MCF 10A (cell line): ENCODE measurements at regions of chr22 and their contacts with region 1.

Region 1: GRCh38 chr22:27885977-27886842 is 32.8 kb downstream of the PITPNB start:
- DNase-seq: peak; percentile 46
- H3K4me3 Mint-ChIP-seq: no peak overlapping the region
- H3K27ac Mint-ChIP-seq: peak overlapping the region; percentile 39
- H3K4me1 Mint-ChIP-seq: peaks cover 31% of the 10 kb centered on the region
- H3K27me3 Mint-ChIP-seq: no peaks in the 10 kb centered on the region
- CTCF ChIP-seq: peak; percentile 86

Region 2: GRCh38 chr22:26756675-26757293 is 1129.4 kb before region 1 on chr22:
- CTCF ChIA-PET with region 1: interaction called, 4 read pairs
- POLR2A ChIA-PET with region 1: no interaction called
- intact Hi-C with region 1: loop called (anchors 2 kb)
- DNase-seq: peak; percentile 11
- H3K4me3 Mint-ChIP-seq: no peak overlapping the region
- H3K27ac Mint-ChIP-seq: no peak overlapping the region
- H3K4me1 Mint-ChIP-seq: no peaks in the 10 kb centered on the region
- H3K27me3 Mint-ChIP-seq: no peaks in the 10 kb centered on the region
- CTCF ChIP-seq: peak; percentile 93

Region 3: DNA sequence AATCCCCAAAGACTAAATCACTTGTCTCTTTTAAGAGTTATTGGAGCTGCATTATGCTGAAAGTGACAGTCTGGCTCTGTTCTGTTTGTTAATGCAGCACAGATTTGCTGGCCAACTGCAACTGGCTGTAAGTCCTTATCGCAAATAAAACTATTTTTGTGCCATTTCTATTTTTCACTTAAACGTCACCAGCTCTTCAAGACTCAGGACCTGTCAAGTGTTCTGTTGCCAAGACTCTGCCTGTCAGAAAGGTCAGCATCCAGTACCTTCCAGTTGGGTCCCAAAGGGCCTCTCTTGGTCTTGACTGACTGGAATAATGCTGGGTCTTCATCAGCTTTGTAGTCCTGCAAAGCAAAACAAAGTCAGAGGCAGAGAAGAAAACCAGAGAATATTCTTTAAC is 12.7 kb before region 1 on chr22:
- CTCF ChIA-PET with region 1: interaction called, 23 read pairs
- POLR2A ChIA-PET with region 1: no interaction called
- intact Hi-C with region 1: no loop called
- DNase-seq: no peak
- H3K4me3 Mint-ChIP-seq: no peak overlapping the region
- H3K27ac Mint-ChIP-seq: no peak overlapping the region
- H3K4me1 Mint-ChIP-seq: peaks cover 6% of the 10 kb centered on the region
- H3K27me3 Mint-ChIP-seq: no peaks in the 10 kb centered on the region
- CTCF ChIP-seq: no peak

Region 4: DNA sequence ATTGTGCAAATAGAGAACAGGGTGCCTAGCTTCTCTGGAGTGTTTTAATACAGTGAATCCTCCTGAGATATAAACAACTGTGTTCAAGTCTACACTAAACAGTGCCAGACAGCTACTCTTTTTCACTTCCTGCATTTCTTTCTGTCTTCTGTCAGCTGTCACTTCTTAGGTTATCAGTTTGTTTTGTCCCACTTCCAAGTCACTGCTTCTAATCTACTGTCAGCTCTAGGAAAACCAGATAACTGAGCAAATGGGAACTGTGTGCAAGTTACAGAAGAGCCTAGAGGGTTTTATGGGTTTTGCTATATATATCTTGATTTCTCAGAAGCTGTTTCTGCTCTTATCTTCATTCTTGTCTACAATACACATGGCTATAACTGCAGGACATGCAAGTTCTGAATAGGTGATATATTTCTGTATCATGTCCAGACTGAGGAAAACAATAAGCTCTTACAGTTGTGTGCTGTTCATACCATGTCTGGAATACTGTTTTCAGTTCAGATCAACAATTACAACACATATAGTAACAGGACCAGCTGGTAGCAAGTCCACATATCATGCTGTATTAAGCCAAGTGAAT is 27.0 kb after region 1 on chr22:
- CTCF ChIA-PET with region 1: interaction called, 29 read pairs
- POLR2A ChIA-PET with region 1: interaction called, 7 read pairs
- intact Hi-C with region 1: no loop called
- DNase-seq: no peak
- H3K4me3 Mint-ChIP-seq: no peak overlapping the region
- H3K27ac Mint-ChIP-seq: no peak overlapping the region
- H3K4me1 Mint-ChIP-seq: peaks cover 43% of the 10 kb centered on the region
- H3K27me3 Mint-ChIP-seq: no peaks in the 10 kb centered on the region
- CTCF ChIP-seq: no peak

Region 5: DNA sequence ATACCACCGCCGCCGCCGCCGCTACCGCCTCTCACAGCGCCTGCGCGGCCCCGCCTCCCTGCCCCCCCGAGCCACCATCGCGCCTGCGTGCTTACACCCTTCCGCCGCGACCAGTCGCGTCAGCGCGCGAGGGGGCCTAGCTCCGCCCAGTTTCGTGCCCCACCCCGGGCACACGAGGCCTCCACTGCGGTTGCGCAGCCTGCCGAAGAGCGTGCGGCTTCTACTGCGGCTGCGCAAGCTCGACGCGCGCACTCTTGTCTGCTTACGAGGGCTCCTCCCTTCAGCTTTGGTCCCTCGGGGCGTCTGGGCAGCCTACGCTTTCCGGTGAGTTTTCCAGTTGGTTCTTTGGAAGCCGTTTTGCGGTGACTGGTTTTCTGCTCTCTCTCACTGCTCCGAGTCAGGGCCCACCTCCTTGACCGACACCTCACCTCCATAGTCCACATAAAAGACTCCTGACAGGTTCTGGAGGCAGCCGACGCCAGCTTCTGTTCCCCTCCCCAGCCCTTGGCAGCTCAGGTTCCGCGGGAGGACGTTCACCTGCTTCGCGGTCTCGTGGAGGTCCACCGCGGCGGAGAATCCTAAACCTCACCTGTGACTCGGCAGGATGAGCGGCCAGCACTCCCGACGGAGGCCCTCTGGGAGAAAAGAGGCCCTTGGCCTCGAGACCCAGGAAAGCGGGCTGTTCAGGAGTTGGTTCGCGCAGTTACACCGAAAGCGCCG is 33.2 kb after region 1 on chr22 and contains the start of gene PITPNB:
- CTCF ChIA-PET with region 1: interaction called, 29 read pairs
- POLR2A ChIA-PET with region 1: interaction called, 24 read pairs
- intact Hi-C with region 1: no loop called
- DNase-seq: peak; percentile 98
- H3K4me3 Mint-ChIP-seq: peak within 1 kb of the TSS; percentile 91
- H3K27ac Mint-ChIP-seq: peak within 1 kb of the TSS; percentile 97
- H3K4me1 Mint-ChIP-seq: peaks cover 39% of the 10 kb centered on the region
- H3K27me3 Mint-ChIP-seq: no peaks in the 10 kb centered on the region
- CTCF ChIP-seq: no peak
- total RNA-seq, gene PITPNB: 93.1 and 124 TPM in 2 replicates

Region 6: DNA sequence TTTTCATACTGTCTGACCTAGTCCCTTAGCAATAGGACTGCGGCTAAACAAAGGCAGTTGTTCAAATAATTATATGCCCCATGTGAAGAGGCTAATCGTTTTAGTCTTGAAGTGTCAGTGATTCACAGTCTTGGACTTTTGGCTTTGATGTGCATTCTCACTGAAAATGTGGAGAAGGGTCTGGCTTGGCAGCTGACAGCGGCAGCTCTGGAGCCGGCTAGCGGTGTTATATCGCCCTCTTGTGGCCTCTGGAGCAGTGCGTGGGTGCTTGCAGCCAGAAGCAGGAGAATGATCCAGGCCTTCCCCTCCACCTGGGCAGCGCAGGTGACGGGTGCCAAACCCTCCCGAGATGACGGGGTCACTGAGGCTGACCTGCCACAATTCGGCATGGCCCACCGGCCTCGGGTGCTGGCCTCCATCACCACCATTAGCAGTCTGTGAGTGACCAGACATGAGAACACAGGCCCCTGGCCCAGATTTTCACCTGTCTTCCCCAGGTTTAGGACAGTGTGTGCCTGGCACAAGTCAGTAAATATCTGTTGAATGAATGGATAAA is 123.1 kb after region 1 on chr22:
- CTCF ChIA-PET with region 1: interaction called, 64 read pairs
- POLR2A ChIA-PET with region 1: interaction called, 4 read pairs
- intact Hi-C with region 1: loop called (anchors 1 kb)
- DNase-seq: peak; percentile 73
- H3K4me3 Mint-ChIP-seq: no peak overlapping the region
- H3K27ac Mint-ChIP-seq: no peak overlapping the region
- H3K4me1 Mint-ChIP-seq: no peaks in the 10 kb centered on the region
- H3K27me3 Mint-ChIP-seq: no peaks in the 10 kb centered on the region
- CTCF ChIP-seq: peak; percentile 97